Heart left ventricle (tissue), 16 donors: ENCODE measurements at regions of chr6 and their contacts with region 1.

Region 1: DNA sequence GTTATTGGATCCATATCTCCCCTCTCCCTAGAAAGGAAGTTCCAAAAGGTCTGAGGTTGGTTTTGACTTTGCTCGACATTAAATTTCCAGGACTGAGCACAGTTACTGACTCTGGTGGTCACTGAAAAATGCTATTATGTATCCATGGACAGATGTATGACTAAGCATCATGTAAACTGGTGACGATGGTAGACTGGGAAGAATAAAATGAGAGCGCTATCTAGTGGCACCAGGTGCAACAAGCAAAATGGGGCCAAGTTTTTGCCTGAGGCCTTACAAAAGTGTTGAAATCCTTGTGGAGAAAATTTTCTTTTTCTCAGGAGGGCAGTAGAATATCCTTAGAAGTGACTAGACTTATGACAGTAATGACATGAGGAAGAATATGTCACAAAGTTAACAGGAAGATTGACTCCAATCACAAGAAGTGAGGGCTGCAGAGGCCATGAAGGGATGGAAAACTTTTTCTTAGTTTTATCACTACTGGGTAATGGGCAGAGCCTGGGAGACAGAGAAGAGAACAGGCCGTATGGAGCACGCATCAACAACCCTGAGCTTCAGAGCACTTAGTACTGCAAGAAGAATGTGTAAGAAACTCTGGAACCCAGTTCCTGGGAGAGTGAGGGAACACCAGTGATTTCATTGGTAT is 88.9 kb upstream of the ELOVL5 start:
- DNase-seq: no peak
- ATAC-seq: peak; percentile 49 to 73 (median 58)
- H3K4me3 ChIP-seq: no peak overlapping the region
- H3K27ac ChIP-seq: no peak overlapping the region
- H3K4me1 ChIP-seq: peaks cover 0 to 32% (median 17%) of the 10 kb centered on the region in 12 donors
- H3K27me3 ChIP-seq: no peaks in the 10 kb centered on the region
- CTCF ChIP-seq: peak; percentile 16 to 63 (median 49)
- POLR2A ChIP-seq: no peak

Region 2: GRCh38 chr6:52995913-52996645 is 441.6 kb before region 1 on chr6:
- intact Hi-C with region 1: loop called in 1 of 10 experiments (anchors 10 kb)
- DNase-seq: peak in 4 of 5 donors; percentile 44 to 51 (median 45)
- ATAC-seq: peak in 2 of 4 donors; percentile 4 to 7
- H3K4me3 ChIP-seq: peak overlapping the region in 10 of 12 donors; percentile 26 to 80 (median 58)
- H3K27ac ChIP-seq: peak overlapping the region in 11 of 12 donors; percentile 58 to 98 (median 91)
- H3K4me1 ChIP-seq: peaks cover 0 to 25% (median 15%) of the 10 kb centered on the region in 12 donors
- H3K27me3 ChIP-seq: no peaks in the 10 kb centered on the region
- CTCF ChIP-seq: no peak
- POLR2A ChIP-seq: no peak

Region 3: GRCh38 chr6:53284901-53285300 is 152.8 kb before region 1 on chr6:
- intact Hi-C with region 1: loop called in 1 of 10 experiments (anchors 5 kb)
- DNase-seq: no peak
- ATAC-seq: no peak
- H3K4me3 ChIP-seq: no peak overlapping the region
- H3K27ac ChIP-seq: no peak overlapping the region
- H3K4me1 ChIP-seq: peaks cover 0 to 47% (median 25%) of the 10 kb centered on the region in 12 donors
- H3K27me3 ChIP-seq: no peaks in the 10 kb centered on the region
- CTCF ChIP-seq: no peak
- POLR2A ChIP-seq: no peak

Region 4: GRCh38 chr6:53348371-53349208 is 89.1 kb before region 1 on chr6 and contains the start of gene ELOVL5:
- intact Hi-C with region 1: loop called in 1 of 10 experiments (anchors 5 kb)
- DNase-seq: peak; percentile 98 to 99 (median 99)
- ATAC-seq: peak; percentile 87 to 96 (median 94)
- H3K4me3 ChIP-seq: peak within 1 kb of the TSS; percentile 75 to 98 (median 90)
- H3K27ac ChIP-seq: peak within 1 kb of the TSS; percentile 89 to 100 (median 97)
- H3K4me1 ChIP-seq: peaks cover 3 to 42% (median 15%) of the 10 kb centered on the region in 12 donors
- H3K27me3 ChIP-seq: no peaks in the 10 kb centered on the region
- CTCF ChIP-seq: peak in 4 of 12 donors; percentile 7 to 14 (median 10)
- POLR2A ChIP-seq: peak; percentile 34 to 88
- total RNA-seq, gene ELOVL5: 17.3 to 47.9 (median 29.3) TPM

Region 5: DNA sequence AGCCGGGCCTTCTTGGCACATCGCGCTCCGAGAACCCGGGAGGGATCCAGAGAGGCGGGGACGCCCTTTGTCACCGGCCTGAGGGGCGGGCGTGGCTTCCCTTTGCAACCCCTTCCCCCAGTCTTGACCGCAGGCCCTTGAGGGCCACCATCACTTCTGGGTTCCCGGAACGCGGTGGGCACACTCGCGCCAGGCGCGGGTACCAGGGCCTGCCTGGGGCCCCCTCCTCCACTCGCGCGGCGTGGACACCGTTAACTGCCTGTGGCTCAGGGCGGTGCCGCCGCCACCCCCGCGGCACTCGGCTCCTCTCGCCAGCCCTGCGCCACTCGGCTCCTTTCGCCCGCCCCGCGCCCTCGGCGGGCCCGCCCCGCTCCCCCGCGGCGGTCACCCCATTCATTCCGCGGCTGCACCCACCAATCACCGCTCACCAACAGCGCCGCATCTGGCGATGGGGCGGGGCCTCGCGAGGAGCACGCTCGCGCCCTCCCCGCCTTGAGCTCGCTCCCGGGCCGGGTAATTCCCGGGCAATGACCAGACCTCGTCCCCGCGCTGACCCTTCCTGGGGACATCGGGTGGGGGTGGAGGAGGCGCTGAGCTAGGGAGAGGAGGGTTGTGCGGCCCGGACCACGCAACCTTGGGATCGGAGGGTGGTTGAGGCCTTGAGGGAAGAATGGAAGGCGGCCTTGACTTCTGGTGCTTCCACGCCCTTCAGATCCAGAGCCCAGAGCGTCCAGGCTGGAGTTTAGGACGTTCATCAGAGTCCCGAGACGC is 78.4 kb before region 1 on chr6:
- intact Hi-C with region 1: loop called in 2 of 10 experiments (anchors 2 to 10 kb)
- DNase-seq: peak; percentile 97 to 98 (median 97)
- ATAC-seq: peak; percentile 96 to 98 (median 98)
- H3K4me3 ChIP-seq: peak overlapping the region; percentile 49 to 78 (median 70)
- H3K27ac ChIP-seq: peak overlapping the region; percentile 90 to 97 (median 94)
- H3K4me1 ChIP-seq: peaks cover 0 to 29% (median 10%) of the 10 kb centered on the region in 12 donors
- H3K27me3 ChIP-seq: no peaks in the 10 kb centered on the region
- CTCF ChIP-seq: peak in 1 of 12 donors; percentile 22
- POLR2A ChIP-seq: peak; percentile 60 to 84